B cell (primary cell): ENCODE measurements at regions of chr7 and their contacts with region 1.

Region 1: DNA sequence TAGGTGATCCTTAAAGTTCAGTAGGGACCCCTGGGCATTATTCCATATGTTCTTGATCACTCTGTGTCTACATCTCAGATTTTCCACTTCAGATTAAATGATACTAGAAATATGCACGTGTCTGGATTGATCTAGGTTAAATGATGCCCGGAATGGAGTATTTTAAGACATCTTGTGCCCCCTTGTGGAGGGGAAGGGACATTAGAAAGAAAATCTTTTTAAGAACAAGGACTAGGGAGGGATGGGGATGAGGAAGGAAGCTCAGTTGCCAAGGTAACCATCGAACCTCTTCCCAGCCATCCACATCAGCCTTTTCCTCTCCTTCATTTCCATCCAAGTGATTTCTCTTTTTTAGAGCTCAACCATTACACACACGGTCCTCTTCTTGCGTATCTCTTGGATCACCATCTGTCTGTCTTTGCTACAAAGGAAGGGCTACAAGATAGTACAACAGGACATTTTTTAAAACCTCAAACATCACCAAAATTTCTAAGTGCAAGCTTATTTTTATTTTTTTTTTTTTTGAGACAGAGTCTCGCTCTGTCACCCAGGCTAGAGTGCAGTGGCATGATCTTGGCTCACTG is 40.5 kb downstream of the PRSS2 start:
- DNase-seq: peak; percentile 84
- ATAC-seq: no peak
- H3K4me3 ChIP-seq: peak overlapping the region in 1 of 5 experiments; percentile 8
- H3K4me3 Mint-ChIP-seq: peak overlapping the region; percentile 60
- H3K27ac ChIP-seq: peak overlapping the region; percentile 1 to 99
- H3K27ac Mint-ChIP-seq: peak overlapping the region; percentile 94
- H3K4me1 ChIP-seq: peaks cover 82 to 83% of the 10 kb centered on the region in 2 donors
- H3K4me1 Mint-ChIP-seq: peaks cover 82% of the 10 kb centered on the region
- H3K27me3 ChIP-seq: no peaks in the 10 kb centered on the region
- H3K27me3 Mint-ChIP-seq: no peaks in the 10 kb centered on the region
- CTCF ChIP-seq: peak; percentile 81

Region 2: GRCh38 chr7:142632291-142633134 is 178.7 kb before region 1 on chr7:
- CTCF ChIA-PET with region 1: interaction called, 197 read pairs
- POLR2A ChIA-PET with region 1: interaction called, 7 read pairs
- intact Hi-C with region 1: loop called (anchors 1 kb)
- DNase-seq: peak; percentile 85
- ATAC-seq: peak; percentile 97
- H3K4me3 ChIP-seq: no peak overlapping the region
- H3K4me3 Mint-ChIP-seq: no peak overlapping the region
- H3K27ac ChIP-seq: no peak overlapping the region
- H3K27ac Mint-ChIP-seq: no peak overlapping the region
- H3K4me1 ChIP-seq: no peaks in the 10 kb centered on the region
- H3K4me1 Mint-ChIP-seq: peaks cover 3% of the 10 kb centered on the region
- H3K27me3 ChIP-seq: peaks cover 0 to 5% (median 2%) of the 10 kb centered on the region in 4 experiments
- H3K27me3 Mint-ChIP-seq: peaks cover 30% of the 10 kb centered on the region
- CTCF ChIP-seq: peak; percentile 85

Region 3: DNA sequence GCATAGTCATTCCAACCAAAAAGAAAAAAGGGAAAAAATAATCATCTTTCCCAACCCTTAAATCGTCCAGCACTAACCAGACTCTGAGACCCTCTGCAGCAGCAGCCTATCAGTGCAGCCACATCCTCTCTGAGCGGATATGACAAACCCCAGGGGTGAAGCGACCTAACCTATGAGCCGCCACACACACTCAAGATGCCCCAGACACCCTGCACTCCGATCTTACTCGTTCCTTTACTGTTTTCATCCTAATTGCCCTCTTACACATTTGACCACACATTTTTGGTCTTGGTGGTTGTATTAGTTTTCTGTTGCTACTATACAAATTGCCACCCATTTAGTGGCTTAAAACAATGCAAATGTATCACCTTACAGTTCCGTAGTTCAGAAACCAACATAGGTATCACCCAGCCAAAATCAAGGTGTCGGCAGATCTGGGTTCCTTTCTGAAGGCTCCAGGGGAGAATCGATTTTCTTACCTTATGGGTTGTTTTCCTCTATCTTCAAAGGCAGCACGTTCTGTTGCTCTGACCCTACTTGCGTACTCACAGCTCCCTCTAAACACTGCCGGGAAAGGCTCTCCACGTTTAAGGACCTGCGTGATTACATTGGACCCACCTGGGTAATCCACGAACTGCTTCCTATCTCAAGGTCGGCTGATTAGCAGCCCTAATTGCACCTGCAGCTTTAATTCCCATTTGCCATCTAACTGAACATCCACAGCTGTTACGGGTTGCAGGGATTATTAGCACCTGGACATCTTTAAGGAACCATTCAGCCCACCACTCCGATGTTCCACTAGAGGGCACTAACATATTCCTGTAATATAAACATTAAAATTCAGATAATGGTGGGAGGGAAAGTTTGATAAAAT is 99.3 kb before region 1 on chr7:
- CTCF ChIA-PET with region 1: interaction called, 288 read pairs
- POLR2A ChIA-PET with region 1: interaction called, 17 read pairs
- intact Hi-C with region 1: loop called (anchors 1 kb)
- DNase-seq: peak; percentile 55
- ATAC-seq: peak; percentile 39
- H3K4me3 ChIP-seq: peak overlapping the region in 1 of 5 experiments; percentile 35
- H3K4me3 Mint-ChIP-seq: peak overlapping the region; percentile 66
- H3K27ac ChIP-seq: no peak overlapping the region
- H3K27ac Mint-ChIP-seq: peak overlapping the region; percentile 42
- H3K4me1 ChIP-seq: peaks cover 17 to 25% of the 10 kb centered on the region in 2 donors
- H3K4me1 Mint-ChIP-seq: peaks cover 24% of the 10 kb centered on the region
- H3K27me3 ChIP-seq: no peaks in the 10 kb centered on the region
- H3K27me3 Mint-ChIP-seq: peaks cover 4% of the 10 kb centered on the region
- CTCF ChIP-seq: peak; percentile 84

Region 4: GRCh38 chr7:142796608-142797385 is 14.4 kb before region 1 on chr7:
- CTCF ChIA-PET with region 1: interaction called, 1,138 read pairs
- POLR2A ChIA-PET with region 1: interaction called, 961 read pairs
- intact Hi-C with region 1: loop called (anchors 1 kb)
- DNase-seq: peak; percentile 54
- ATAC-seq: peak; percentile 40
- H3K4me3 ChIP-seq: peak overlapping the region; percentile 45 to 93 (median 90)
- H3K4me3 Mint-ChIP-seq: peak overlapping the region; percentile 100
- H3K27ac ChIP-seq: peak overlapping the region; percentile 94 to 99
- H3K27ac Mint-ChIP-seq: peak overlapping the region; percentile 100
- H3K4me1 ChIP-seq: peaks cover 62 to 81% of the 10 kb centered on the region in 2 donors
- H3K4me1 Mint-ChIP-seq: peaks cover 82% of the 10 kb centered on the region
- H3K27me3 ChIP-seq: no peaks in the 10 kb centered on the region
- H3K27me3 Mint-ChIP-seq: no peaks in the 10 kb centered on the region
- CTCF ChIP-seq: no peak

Region 5: DNA sequence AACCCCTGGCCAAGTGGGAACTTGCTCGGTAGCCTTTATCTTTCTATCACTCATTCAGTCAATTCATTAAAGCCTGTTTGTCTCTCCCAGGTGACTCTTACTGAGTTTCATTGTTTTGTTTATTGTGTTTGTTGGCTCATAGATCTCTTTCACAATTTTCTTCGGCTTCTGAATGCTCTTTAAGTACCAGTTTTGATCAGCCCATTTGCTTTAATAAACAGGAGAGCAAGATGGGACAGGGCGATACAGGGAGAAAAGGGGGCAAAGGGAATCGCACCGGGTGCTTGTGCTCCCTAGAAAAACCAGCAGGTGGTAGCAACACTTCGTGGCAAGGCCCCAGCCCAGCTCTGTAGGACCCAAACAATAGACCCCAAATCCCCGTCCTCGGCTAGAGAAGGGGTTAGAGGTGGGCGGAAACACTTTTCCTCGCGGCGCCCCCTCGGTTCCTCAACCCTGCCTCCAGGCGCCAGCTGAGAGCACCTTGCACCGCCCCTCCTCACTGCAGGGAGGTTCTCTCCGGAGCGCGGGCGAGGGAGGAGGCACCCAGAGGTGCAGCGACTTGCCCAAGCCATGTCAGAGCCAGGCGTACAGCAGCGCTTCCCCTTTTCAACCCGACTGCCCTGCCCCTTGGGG is 42.6 kb after region 1 on chr7:
- CTCF ChIA-PET with region 1: interaction called, 43 read pairs
- POLR2A ChIA-PET with region 1: interaction called, 56 read pairs
- intact Hi-C with region 1: loop called (anchors 1 kb)
- DNase-seq: peak; percentile 91
- ATAC-seq: peak; percentile 88
- H3K4me3 ChIP-seq: peak overlapping the region; percentile 46 to 99 (median 92)
- H3K4me3 Mint-ChIP-seq: peak overlapping the region; percentile 99
- H3K27ac ChIP-seq: peak overlapping the region; percentile 82 to 86
- H3K27ac Mint-ChIP-seq: peak overlapping the region; percentile 99
- H3K4me1 ChIP-seq: peaks cover 12 to 24% of the 10 kb centered on the region in 2 donors
- H3K4me1 Mint-ChIP-seq: peaks cover 29% of the 10 kb centered on the region
- H3K27me3 ChIP-seq: no peaks in the 10 kb centered on the region
- H3K27me3 Mint-ChIP-seq: no peaks in the 10 kb centered on the region
- CTCF ChIP-seq: peak; percentile 89

Region 6: GRCh38 chr7:142939226-142939910 is 128.1 kb after region 1 on chr7 and contains the start of gene LLCFC1:
- CTCF ChIA-PET with region 1: no interaction called
- POLR2A ChIA-PET with region 1: no interaction called
- intact Hi-C with region 1: no loop called
- DNase-seq: no peak
- ATAC-seq: no peak
- H3K4me3 ChIP-seq: no peak within 1 kb of the TSS
- H3K4me3 Mint-ChIP-seq: no peak within 1 kb of the TSS
- H3K27ac ChIP-seq: no peak within 1 kb of the TSS
- H3K27ac Mint-ChIP-seq: no peak within 1 kb of the TSS
- H3K4me1 ChIP-seq: no peaks in the 10 kb centered on the region
- H3K4me1 Mint-ChIP-seq: no peaks in the 10 kb centered on the region
- H3K27me3 ChIP-seq: peaks cover 0 to 3% (median 0%) of the 10 kb centered on the region in 4 experiments
- H3K27me3 Mint-ChIP-seq: peaks cover 26% of the 10 kb centered on the region
- CTCF ChIP-seq: no peak
- total RNA-seq, gene LLCFC1: not detected in 2 replicates

Region 7: GRCh38 chr7:143008007-143008901 is 197.0 kb after region 1 on chr7:
- CTCF ChIA-PET with region 1: interaction called, 57 read pairs
- POLR2A ChIA-PET with region 1: no interaction called
- intact Hi-C with region 1: loop called (anchors 2 kb)
- DNase-seq: peak; percentile 88
- ATAC-seq: peak; percentile 96
- H3K4me3 ChIP-seq: no peak overlapping the region
- H3K4me3 Mint-ChIP-seq: no peak overlapping the region
- H3K27ac ChIP-seq: no peak overlapping the region
- H3K27ac Mint-ChIP-seq: no peak overlapping the region
- H3K4me1 ChIP-seq: peaks cover 36 to 49% of the 10 kb centered on the region in 2 donors
- H3K4me1 Mint-ChIP-seq: peaks cover 49% of the 10 kb centered on the region
- H3K27me3 ChIP-seq: no peaks in the 10 kb centered on the region
- H3K27me3 Mint-ChIP-seq: no peaks in the 10 kb centered on the region
- CTCF ChIP-seq: peak; percentile 92

Region 8: DNA sequence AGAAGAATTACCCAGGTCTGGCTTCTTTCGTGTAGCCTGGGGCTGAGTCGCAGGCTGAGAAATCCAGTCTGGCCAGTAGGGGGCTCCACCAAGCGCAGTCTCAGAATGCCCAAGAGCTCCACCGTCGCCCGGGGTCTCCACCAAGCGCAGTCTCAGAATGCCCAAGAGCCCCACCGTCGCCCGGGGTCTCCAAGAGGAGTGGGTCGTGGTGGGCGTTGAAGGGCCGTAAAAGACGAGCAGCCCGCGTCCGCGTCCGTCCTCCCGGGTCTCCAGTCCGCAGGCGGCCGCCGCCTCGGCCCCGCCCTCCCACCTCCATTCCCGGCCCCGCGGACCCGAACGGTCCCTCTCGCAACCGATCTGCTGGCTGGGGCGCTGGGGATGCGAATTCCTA is 569.0 kb after region 1 on chr7:
- CTCF ChIA-PET with region 1: no interaction called
- POLR2A ChIA-PET with region 1: no interaction called
- intact Hi-C with region 1: loop called (anchors 5 kb)
- DNase-seq: peak; percentile 92
- ATAC-seq: peak; percentile 55
- H3K4me3 ChIP-seq: peak overlapping the region; percentile 1 to 99 (median 90)
- H3K4me3 Mint-ChIP-seq: peak overlapping the region; percentile 92
- H3K27ac ChIP-seq: peak overlapping the region; percentile 87 to 89
- H3K27ac Mint-ChIP-seq: peak overlapping the region; percentile 93
- H3K4me1 ChIP-seq: peaks cover 43 to 53% of the 10 kb centered on the region in 2 donors
- H3K4me1 Mint-ChIP-seq: peaks cover 28% of the 10 kb centered on the region
- H3K27me3 ChIP-seq: no peaks in the 10 kb centered on the region
- H3K27me3 Mint-ChIP-seq: no peaks in the 10 kb centered on the region
- CTCF ChIP-seq: peak; percentile 85